MCF 10A (cell line): ENCODE measurements at regions of chr1 and their contacts with region 1.

Region 1: GRCh38 chr1:155193275-155193990 is 14.3 kb downstream of the THBS3 start:
- DNase-seq: peak; percentile 100
- H3K4me3 Mint-ChIP-seq: peak overlapping the region; percentile 94
- H3K27ac Mint-ChIP-seq: peak overlapping the region; percentile 100
- H3K4me1 Mint-ChIP-seq: peaks cover 32% of the 10 kb centered on the region
- H3K27me3 Mint-ChIP-seq: no peaks in the 10 kb centered on the region
- CTCF ChIP-seq: peak; percentile 99

Region 2: DNA sequence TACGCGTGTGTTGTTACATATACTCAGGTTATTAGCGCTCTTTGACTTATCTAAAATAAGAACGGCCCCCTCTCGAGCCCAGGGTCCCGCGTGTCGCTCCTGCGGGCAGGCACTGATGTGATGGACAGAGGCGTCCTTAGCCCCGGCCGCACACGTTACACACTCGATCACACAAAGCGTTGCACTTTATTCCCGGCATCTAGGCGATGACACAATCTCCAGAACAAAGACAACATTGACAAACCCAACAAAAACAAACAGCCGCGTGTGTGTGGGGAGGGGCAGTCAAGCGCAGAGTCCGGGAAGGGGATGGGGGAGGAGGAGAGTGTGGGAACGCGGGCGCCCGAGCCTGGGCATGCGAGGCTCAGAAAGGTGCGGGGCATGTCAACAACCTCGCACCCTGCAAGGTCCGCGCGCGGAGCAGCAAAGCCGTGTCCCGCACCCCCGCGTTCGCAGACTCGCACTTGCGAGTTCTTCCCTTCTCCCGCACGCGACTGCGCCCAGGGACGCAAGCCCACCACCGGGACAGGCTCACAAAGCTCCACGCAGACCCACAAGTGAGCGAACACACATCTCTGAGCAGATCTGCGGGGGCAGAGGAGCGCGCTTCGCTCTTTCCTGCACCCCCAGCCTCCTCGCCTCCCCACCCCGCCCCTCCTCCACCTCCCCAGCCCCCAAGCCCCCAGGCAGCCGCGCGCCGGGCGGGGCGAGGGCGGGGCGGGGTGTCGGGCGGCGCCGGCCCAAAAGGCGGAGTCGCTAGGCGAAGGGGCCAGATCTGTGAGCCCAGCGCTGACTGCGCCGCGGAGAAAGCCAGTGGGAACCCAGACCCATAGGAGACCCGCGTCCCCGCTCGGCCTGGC is 66.1 kb before region 1 on chr1 and contains the start of gene EFNA1:
- CTCF ChIA-PET with region 1: interaction called, 8 read pairs
- POLR2A ChIA-PET with region 1: interaction called, 61 read pairs
- intact Hi-C with region 1: no loop called
- DNase-seq: peak; percentile 99
- H3K4me3 Mint-ChIP-seq: peak within 1 kb of the TSS; percentile 100
- H3K27ac Mint-ChIP-seq: peak within 1 kb of the TSS; percentile 90
- H3K4me1 Mint-ChIP-seq: peaks cover 60% of the 10 kb centered on the region
- H3K27me3 Mint-ChIP-seq: no peaks in the 10 kb centered on the region
- CTCF ChIP-seq: no peak
- total RNA-seq, gene EFNA1: 38.9 and 42.3 TPM in 2 replicates

Region 3: DNA sequence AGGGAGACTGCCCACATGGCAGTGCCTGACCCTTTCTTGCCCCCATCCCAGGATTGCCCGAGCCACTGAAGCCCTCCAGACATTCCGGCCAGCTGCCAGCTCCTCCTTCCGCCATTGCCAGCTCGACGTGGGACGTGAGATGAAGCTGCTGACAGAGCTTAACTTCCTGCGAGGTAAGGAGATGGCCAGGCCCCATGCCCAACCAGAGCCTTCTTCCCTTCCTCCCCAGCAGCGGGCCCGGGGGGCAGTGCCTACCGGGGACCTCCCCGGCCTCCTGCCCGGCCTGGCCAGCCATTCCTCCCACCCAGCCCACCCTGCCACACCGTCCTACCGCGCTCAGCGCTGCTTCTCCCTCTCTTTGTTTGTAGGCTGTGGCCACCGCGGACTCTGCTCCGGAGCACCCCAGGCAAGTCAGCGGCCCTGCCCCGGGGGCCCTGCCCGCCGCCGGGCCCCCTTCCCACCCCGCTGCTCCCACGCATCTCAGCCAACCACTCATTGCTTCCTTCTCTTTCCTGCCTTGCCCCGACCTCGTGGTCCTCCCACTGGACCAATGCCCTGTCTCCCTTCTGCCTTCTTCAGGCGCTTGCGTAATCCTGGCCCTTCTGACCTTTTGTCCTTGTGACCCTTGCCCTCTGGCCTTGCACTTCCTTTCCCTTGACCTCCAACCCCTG is 14.9 kb before region 1 on chr1:
- CTCF ChIA-PET with region 1: interaction called, 95 read pairs
- POLR2A ChIA-PET with region 1: interaction called, 215 read pairs
- intact Hi-C with region 1: loop called (anchors 2 kb)
- DNase-seq: no peak
- H3K4me3 Mint-ChIP-seq: no peak overlapping the region
- H3K27ac Mint-ChIP-seq: no peak overlapping the region
- H3K4me1 Mint-ChIP-seq: peaks cover 25% of the 10 kb centered on the region
- H3K27me3 Mint-ChIP-seq: no peaks in the 10 kb centered on the region
- CTCF ChIP-seq: no peak

Region 4: GRCh38 chr1:155218854-155219591 is 25.6 kb after region 1 on chr1:
- CTCF ChIA-PET with region 1: interaction called, 5 read pairs
- POLR2A ChIA-PET with region 1: interaction called, 37 read pairs
- intact Hi-C with region 1: no loop called
- DNase-seq: peak; percentile 83
- H3K4me3 Mint-ChIP-seq: peak overlapping the region; percentile 62
- H3K27ac Mint-ChIP-seq: peak overlapping the region; percentile 93
- H3K4me1 Mint-ChIP-seq: peaks cover 20% of the 10 kb centered on the region
- H3K27me3 Mint-ChIP-seq: no peaks in the 10 kb centered on the region
- CTCF ChIP-seq: no peak

Region 5: DNA sequence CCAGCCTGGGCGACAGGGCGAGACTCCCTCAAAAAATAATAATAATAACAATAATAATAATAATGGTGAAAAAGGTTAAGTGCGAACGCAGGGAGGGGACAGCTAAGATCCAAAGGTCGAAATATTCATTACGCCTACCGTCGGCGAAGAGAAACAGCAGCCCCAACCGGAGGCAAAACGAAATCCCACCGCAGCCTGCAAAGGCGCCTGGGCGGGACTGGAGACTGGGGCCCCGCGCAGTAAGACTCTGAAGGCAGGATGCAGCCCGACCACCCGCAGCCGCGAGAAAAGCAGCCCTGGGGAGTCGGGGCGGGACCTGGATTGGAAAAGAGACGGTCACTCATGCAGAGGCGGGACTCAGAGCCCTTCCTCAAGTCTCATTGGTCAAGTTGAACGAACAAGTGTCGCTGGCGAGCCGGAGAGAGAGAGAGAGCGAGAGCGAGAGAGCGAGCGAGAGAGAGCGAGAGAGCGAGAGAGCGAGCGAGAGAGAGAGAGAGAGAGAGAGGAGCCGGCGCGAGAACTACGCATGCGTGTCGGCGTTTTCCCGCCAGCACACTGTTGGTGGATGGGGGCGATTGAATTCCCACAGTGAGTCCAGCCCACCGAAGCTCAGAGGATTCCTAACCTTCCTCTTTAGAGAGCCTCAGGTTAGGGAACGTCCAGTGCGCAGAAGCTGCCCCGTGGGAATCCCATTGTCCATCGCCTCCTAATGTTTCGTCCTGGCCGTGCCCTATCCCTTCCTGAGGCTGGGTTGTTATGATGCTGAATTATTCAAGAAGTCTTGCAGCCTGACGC is 51.1 kb after region 1 on chr1:
- CTCF ChIA-PET with region 1: interaction called, 6 read pairs
- POLR2A ChIA-PET with region 1: interaction called, 12 read pairs
- intact Hi-C with region 1: no loop called
- DNase-seq: peak; percentile 100
- H3K4me3 Mint-ChIP-seq: peak overlapping the region; percentile 70
- H3K27ac Mint-ChIP-seq: peak overlapping the region; percentile 29
- H3K4me1 Mint-ChIP-seq: peaks cover 24% of the 10 kb centered on the region
- H3K27me3 Mint-ChIP-seq: no peaks in the 10 kb centered on the region
- CTCF ChIP-seq: peak; percentile 38